B cell (primary cell): ENCODE measurements at regions of chr6 and their contacts with region 1.

Region 1: DNA sequence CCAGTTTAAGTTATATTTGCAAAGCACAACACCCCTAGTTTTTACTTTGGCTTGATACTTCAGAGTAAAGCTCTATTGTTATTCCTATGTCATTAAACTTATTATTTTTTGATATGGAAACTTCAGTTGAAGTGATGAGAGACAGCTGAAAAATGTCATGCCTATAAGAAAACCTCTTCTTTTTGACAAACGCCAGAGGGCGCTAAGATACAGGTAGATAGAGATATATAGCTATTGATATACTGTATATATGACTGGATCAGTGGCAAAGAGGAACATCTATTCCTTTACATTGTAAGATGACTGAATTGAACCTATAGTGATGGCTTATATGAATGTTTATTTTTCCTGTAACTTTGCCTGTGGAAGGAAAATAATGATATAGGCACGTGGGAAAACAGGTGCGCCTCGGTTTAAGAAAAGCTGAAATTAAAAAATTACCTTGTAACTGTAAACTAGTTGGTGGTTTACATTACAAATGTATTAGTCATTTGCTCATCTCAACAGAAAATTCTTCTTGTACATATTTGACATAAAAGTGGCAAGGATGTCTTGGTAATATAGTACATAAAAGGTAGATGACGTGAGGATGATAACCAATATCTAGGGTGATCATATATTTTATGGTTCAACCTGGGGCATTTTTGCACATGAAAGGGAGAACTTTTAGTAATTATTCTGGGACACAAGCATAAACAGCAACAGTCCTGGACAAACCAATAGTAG is 74.1 kb downstream of the LAMA4 start:
- DNase-seq: peak; percentile 80
- ATAC-seq: peak; percentile 57
- H3K4me3 ChIP-seq: no peak overlapping the region
- H3K4me3 Mint-ChIP-seq: no peak overlapping the region
- H3K27ac ChIP-seq: no peak overlapping the region
- H3K27ac Mint-ChIP-seq: no peak overlapping the region
- H3K4me1 ChIP-seq: no peaks in the 10 kb centered on the region
- H3K4me1 Mint-ChIP-seq: no peaks in the 10 kb centered on the region
- H3K27me3 ChIP-seq: peaks cover 0 to 3% (median 1%) of the 10 kb centered on the region in 4 experiments
- H3K27me3 Mint-ChIP-seq: peaks cover 32% of the 10 kb centered on the region
- CTCF ChIP-seq: peak; percentile 88

Region 2: GRCh38 chr6:112311950-112312547 is 131.8 kb after region 1 on chr6:
- CTCF ChIA-PET with region 1: interaction called, 71 read pairs
- POLR2A ChIA-PET with region 1: no interaction called
- intact Hi-C with region 1: loop called (anchors 1 kb)
- DNase-seq: peak; percentile 25
- ATAC-seq: no peak
- H3K4me3 ChIP-seq: no peak overlapping the region
- H3K4me3 Mint-ChIP-seq: no peak overlapping the region
- H3K27ac ChIP-seq: no peak overlapping the region
- H3K27ac Mint-ChIP-seq: no peak overlapping the region
- H3K4me1 ChIP-seq: peaks cover 10 to 11% of the 10 kb centered on the region in 2 donors
- H3K4me1 Mint-ChIP-seq: peaks cover 14% of the 10 kb centered on the region
- H3K27me3 ChIP-seq: no peaks in the 10 kb centered on the region
- H3K27me3 Mint-ChIP-seq: no peaks in the 10 kb centered on the region
- CTCF ChIP-seq: peak; percentile 79

Region 3: GRCh38 chr6:112443179-112444065 is 263.2 kb after region 1 on chr6:
- CTCF ChIA-PET with region 1: no interaction called
- POLR2A ChIA-PET with region 1: no interaction called
- intact Hi-C with region 1: no loop called
- DNase-seq: no peak
- ATAC-seq: no peak
- H3K4me3 ChIP-seq: no peak overlapping the region
- H3K4me3 Mint-ChIP-seq: no peak overlapping the region
- H3K27ac ChIP-seq: no peak overlapping the region
- H3K27ac Mint-ChIP-seq: no peak overlapping the region
- H3K4me1 ChIP-seq: no peaks in the 10 kb centered on the region
- H3K4me1 Mint-ChIP-seq: no peaks in the 10 kb centered on the region
- H3K27me3 ChIP-seq: peaks cover 0 to 2% (median 0%) of the 10 kb centered on the region in 4 experiments
- H3K27me3 Mint-ChIP-seq: no peaks in the 10 kb centered on the region
- CTCF ChIP-seq: no peak

Region 4: DNA sequence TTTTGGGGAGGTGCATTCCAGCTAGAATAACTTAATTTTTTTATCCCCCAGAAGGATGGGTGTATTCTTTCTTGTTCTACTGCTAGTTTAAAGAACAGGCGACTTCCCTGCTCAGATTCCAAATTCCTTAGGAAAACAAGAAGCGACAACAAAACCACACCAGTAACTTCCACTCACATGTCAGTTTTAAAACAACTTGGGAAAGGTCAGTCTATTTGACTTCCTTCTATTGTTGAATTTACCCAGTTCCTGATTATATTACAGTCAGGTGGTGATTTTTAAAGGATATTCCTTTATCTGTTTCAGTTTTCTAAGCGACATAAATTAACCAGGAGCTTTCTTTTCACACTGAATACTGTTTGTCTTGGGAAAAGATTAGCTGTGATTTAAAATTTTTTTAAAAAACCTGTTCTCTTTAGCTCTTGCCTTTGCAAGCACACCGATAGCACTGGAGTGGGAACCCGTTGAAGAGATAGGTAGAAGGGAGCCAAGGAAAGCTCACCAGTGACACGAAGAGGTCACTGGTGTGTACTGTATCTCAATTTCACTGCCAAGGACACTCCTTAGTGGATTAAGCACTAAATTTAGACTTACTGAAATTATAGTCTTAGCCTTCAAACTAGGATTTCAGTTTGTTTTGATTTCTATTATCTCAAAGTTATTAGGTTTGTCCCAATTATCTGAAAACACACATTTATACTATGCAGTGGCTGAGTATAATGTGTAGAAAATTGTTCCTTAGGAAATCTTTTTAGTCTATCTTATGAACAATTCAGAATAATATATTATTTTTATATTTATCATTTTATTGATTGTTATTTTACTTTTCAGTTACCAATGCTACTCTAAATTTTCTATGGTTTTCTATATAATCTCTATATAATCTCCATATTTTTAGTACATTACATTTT is 1699.2 kb after region 1 on chr6:
- CTCF ChIA-PET with region 1: interaction called, 47 read pairs
- POLR2A ChIA-PET with region 1: no interaction called
- intact Hi-C with region 1: loop called (anchors 1 kb)
- DNase-seq: peak; percentile 74
- ATAC-seq: peak; percentile 100
- H3K4me3 ChIP-seq: no peak overlapping the region
- H3K4me3 Mint-ChIP-seq: no peak overlapping the region
- H3K27ac ChIP-seq: no peak overlapping the region
- H3K27ac Mint-ChIP-seq: no peak overlapping the region
- H3K4me1 ChIP-seq: no peaks in the 10 kb centered on the region
- H3K4me1 Mint-ChIP-seq: peaks cover 3% of the 10 kb centered on the region
- H3K27me3 ChIP-seq: no peaks in the 10 kb centered on the region
- H3K27me3 Mint-ChIP-seq: no peaks in the 10 kb centered on the region
- CTCF ChIP-seq: peak; percentile 91

Region 5: DNA sequence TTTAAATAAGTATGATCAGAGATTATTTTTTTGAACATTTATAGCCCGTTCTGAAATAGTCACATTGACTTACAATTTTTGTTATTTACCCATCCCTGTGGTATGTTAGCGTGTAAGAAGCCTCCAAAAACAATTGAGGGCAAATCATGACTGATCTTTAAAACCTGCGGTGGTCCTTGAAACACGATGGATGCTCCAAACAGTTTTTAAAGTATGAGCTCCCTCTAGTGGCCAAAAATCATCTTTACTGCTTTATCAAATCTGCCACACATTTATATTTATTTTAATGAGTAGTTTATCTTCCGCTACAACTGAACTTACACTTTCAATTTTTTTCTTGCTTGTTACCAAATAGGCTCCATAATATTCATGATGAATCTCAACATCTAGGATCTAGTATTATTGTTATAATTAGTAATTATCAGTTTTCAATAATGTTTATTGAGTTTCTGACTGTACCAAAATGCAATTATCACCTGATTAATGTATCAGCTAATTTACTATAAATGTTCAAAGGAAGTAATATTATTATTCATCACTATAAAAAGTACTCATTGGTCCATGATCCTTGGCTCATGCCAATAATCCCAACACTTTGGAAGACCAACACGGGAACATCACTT is 1729.1 kb after region 1 on chr6:
- CTCF ChIA-PET with region 1: interaction called, 79 read pairs
- POLR2A ChIA-PET with region 1: no interaction called
- intact Hi-C with region 1: loop called (anchors 1 kb)
- DNase-seq: peak; percentile 72
- ATAC-seq: peak; percentile 57
- H3K4me3 ChIP-seq: no peak overlapping the region
- H3K4me3 Mint-ChIP-seq: no peak overlapping the region
- H3K27ac ChIP-seq: no peak overlapping the region
- H3K27ac Mint-ChIP-seq: no peak overlapping the region
- H3K4me1 ChIP-seq: no peaks in the 10 kb centered on the region
- H3K4me1 Mint-ChIP-seq: peaks cover 2% of the 10 kb centered on the region
- H3K27me3 ChIP-seq: no peaks in the 10 kb centered on the region
- H3K27me3 Mint-ChIP-seq: no peaks in the 10 kb centered on the region
- CTCF ChIP-seq: peak; percentile 97

Region 6: DNA sequence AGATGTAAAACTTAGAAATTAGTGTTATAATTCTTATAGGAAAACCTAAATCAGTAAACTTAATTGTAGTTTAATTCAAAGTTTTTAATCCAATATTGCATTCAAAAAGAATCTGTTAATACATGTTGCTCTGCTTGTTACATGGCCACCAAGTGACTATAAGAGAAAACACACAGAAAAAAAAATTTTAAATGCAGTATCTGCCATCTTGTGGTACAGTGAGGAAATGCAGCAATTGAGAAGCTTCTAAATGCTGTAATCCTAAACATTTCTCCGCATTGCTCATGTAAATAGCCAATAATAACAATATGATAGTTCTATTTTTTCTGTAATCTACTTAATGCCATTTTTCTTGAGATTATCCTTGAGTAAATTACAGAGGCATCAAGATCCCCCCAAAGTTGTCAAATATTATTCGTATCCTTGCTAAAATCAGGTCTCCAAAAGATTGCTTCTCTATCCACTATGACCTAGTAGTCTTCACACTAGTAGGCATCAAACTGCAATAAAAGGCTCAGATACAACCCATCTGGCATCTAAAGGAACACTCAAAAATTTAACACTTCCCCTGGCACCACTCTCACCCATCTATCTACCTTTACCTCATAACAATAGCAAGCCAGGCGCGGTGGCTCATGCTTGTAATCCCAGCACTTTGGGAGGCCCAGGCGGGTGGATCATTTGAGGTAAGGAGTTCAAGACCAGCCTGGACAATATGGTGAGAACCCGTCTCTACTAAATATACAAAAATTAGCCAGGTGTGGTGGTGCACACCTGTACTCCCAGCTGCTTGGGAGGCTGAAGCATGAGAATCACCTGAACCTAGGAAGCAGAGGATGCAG is 1756.1 kb after region 1 on chr6:
- CTCF ChIA-PET with region 1: interaction called, 22 read pairs
- POLR2A ChIA-PET with region 1: no interaction called
- intact Hi-C with region 1: loop called (anchors 1 kb)
- DNase-seq: peak; percentile 59
- ATAC-seq: peak; percentile 58
- H3K4me3 ChIP-seq: no peak overlapping the region
- H3K4me3 Mint-ChIP-seq: no peak overlapping the region
- H3K27ac ChIP-seq: no peak overlapping the region
- H3K27ac Mint-ChIP-seq: no peak overlapping the region
- H3K4me1 ChIP-seq: no peaks in the 10 kb centered on the region
- H3K4me1 Mint-ChIP-seq: no peaks in the 10 kb centered on the region
- H3K27me3 ChIP-seq: no peaks in the 10 kb centered on the region
- H3K27me3 Mint-ChIP-seq: no peaks in the 10 kb centered on the region
- CTCF ChIP-seq: peak; percentile 87